ENCODE measurements at regions of chr22 and their contacts with region 1.

Region 1: DNA sequence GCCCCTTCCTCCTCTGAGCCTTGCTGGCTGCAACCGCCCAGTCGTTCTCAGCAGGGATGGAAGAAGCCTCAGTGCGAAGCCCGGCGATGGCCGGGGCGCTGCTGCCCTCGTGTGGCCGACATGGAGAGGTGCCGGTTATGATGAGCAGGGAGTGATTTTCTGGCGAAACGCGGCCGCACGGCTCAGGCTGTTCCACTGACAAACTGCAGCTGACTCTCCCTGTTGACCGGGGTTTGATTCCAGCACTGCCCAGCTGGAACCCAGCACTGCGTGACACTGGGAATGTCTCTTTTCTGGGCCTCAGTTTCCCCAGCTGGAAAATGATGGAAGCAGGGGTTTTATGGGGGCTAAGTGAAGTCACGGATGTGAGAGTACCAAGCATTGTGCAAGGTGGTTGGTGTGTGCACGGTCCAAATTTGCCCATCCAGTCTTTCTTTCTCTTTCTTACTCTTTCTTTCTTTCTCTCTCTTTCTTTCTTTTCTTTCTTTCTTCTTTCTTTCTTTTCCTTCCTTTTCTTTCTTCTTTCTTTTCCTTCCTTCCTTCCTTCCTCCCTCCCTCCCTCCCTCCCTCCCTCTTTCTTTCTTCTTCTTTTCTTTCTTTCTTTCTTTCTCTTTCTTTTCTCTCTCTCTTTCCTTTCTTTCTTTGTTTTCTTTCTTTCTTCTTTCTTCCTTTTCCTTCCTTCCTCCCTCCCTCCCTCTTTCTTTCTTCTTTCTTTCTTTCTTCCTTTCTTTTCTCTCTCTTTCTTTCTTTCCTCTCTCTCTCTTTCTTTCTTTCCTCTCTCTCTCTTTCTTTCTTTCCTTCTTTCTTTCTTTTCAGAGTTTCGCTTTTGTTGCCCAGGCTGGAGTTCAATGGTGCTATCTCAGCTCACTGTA is 25.8 kb upstream of the MPPED1 start:
- DNase-seq: peak; percentile 83
- H3K4me3 ChIP-seq: no peak overlapping the region
- H3K27ac ChIP-seq: no peak overlapping the region
- H3K4me1 ChIP-seq: no peaks in the 10 kb centered on the region
- H3K27me3 ChIP-seq: peaks cover 29% of the 10 kb centered on the region
- CTCF ChIP-seq: peak; percentile 95

Region 2: DNA sequence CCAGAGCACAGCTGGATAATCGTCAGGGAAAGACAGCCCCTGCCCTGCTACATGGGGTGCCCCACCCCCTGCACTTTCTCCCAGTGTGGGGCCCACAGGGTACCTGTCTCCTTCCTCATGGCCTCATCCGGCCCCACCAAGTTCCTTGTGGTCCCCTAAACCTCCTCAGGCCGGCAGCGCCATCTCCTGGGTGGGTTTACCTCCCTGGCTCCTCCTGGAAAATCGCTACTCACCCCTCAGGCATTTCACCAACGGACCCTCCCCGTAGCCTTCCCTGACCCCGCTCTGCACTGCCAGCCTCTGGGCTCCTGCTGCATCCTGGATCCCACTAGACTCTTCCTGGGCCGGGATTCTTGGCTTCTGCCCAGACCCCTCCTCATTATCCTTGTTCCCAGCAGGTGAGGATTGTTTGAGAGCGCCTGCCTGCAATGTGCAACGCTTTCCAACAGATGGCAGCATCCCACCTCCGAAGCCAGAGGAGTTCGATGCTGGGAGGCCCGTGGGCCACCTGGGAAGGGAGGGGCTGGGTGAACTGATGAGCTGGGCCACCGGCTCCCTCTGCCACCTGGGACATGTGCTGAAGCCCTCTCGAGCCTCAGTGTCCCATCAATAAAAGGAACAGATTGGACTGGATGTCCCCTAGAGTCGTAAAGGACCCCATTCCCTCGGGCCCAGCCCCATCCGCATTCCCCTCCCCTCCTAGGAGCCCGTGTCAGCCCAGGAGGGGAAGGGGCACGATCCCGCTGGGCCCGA is 154.9 kb before region 1 on chr22:
- CTCF ChIA-PET with region 1: interaction called, 5 read pairs
- POLR2A ChIA-PET with region 1: no interaction called
- intact Hi-C with region 1: loop called (anchors 1 kb)
- DNase-seq: peak; percentile 71
- H3K4me3 ChIP-seq: no peak overlapping the region
- H3K27ac ChIP-seq: no peak overlapping the region
- H3K4me1 ChIP-seq: peaks cover 13% of the 10 kb centered on the region
- H3K27me3 ChIP-seq: no peaks in the 10 kb centered on the region
- CTCF ChIP-seq: peak; percentile 97

Region 3: DNA sequence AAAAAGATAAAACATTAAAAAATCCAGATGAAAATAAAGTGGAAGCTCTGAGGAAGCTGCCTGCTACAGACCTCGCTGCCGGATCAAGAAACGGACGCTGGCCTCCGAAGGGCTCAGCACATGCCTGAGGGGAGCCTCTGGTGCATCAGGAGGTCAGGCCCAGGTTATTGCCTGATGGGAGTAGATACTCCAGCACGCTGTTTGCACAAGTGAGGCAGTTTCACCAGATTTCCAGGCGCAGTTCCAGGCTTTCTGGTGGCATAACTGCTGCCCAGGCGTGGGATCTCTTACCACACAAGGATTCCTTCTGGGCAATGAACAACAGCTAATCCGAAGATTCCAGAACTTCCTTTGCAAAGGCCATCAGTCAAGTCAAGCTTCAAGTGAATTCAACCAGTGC is 180.0 kb after region 1 on chr22:
- CTCF ChIA-PET with region 1: interaction called, 12 read pairs
- POLR2A ChIA-PET with region 1: no interaction called
- intact Hi-C with region 1: no loop called
- DNase-seq: no peak
- H3K4me3 ChIP-seq: no peak overlapping the region
- H3K27ac ChIP-seq: no peak overlapping the region
- H3K4me1 ChIP-seq: peaks cover 6% of the 10 kb centered on the region
- H3K27me3 ChIP-seq: no peaks in the 10 kb centered on the region
- CTCF ChIP-seq: no peak

Region 4: GRCh38 chr22:43796567-43796966 is 410.6 kb after region 1 on chr22:
- CTCF ChIA-PET with region 1: interaction called, 3 read pairs
- POLR2A ChIA-PET with region 1: no interaction called
- intact Hi-C with region 1: loop called (anchors 5 kb)
- DNase-seq: peak; percentile 33
- H3K4me3 ChIP-seq: no peak overlapping the region
- H3K27ac ChIP-seq: no peak overlapping the region
- H3K4me1 ChIP-seq: peaks cover 5% of the 10 kb centered on the region
- H3K27me3 ChIP-seq: peaks cover 7% of the 10 kb centered on the region
- CTCF ChIP-seq: peak; percentile 56

Region 5: GRCh38 chr22:43884600-43885325 is 498.8 kb after region 1 on chr22:
- CTCF ChIA-PET with region 1: no interaction called
- POLR2A ChIA-PET with region 1: no interaction called
- intact Hi-C with region 1: loop called (anchors 5 kb)
- DNase-seq: peak; percentile 72
- H3K4me3 ChIP-seq: no peak overlapping the region
- H3K27ac ChIP-seq: no peak overlapping the region
- H3K4me1 ChIP-seq: no peaks in the 10 kb centered on the region
- H3K27me3 ChIP-seq: peaks cover 23% of the 10 kb centered on the region
- CTCF ChIP-seq: peak; percentile 85

Measured in A673 (cell line).